HepG2 (cell line): ENCODE measurements at regions of chr2 and their contacts with region 1.

Region 1: GRCh38 chr2:183038341-183039300 is at the start of gene NCKAP1:
- DNase-seq: peak; percentile 76
- ATAC-seq: peak; percentile 92
- H3K4me3 ChIP-seq: peak within 1 kb of the TSS; percentile 79 to 99 (median 98)
- H3K27ac ChIP-seq: peak within 1 kb of the TSS; percentile 92
- H3K4me1 ChIP-seq: peaks cover 38% of the 10 kb centered on the region
- H3K27me3 ChIP-seq: peaks cover 2 to 13% of the 10 kb centered on the region in 2 experiments; a peak in 3 of 5 replicates
- CTCF ChIP-seq: peak; percentile 79
- EP300 ChIP-seq: peak in 1 of 2 experiments; percentile 17; a peak in 1 of 4 replicates
- POLR2A ChIP-seq: no peak
- RAD21 ChIP-seq: peak; percentile 88
- total RNA-seq, gene NCKAP1: 96.3 and 160 TPM in 2 replicates

Region 2: DNA sequence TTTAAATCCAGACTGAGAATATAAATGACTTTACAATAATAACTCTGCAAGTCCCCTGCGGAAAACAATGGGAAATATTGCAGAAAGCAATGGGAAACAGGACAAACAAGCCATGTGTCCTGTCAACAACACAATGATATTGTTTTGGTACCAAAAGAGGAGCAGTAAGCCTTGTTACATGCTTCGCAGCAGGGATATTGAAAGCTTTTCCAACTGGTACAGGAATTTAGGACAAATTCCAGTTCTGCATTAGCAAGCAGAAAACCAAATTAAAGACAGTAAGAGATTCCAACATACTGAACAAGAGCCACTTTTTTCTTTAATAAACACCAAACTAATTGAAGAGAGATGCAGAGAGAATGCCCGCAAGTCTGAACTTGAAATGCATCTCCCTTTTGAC is 202.2 kb before region 1 on chr2:
- CTCF ChIA-PET with region 1: no interaction called
- POLR2A ChIA-PET with region 1: no interaction called
- in situ Hi-C with region 1: no loop called
- intact Hi-C with region 1: no loop called
- DNase-seq: no peak
- ATAC-seq: no peak
- H3K4me3 ChIP-seq: no peak overlapping the region
- H3K27ac ChIP-seq: no peak overlapping the region
- H3K4me1 ChIP-seq: no peaks in the 10 kb centered on the region
- H3K27me3 ChIP-seq: no peaks in the 10 kb centered on the region
- CTCF ChIP-seq: no peak
- EP300 ChIP-seq: no peak
- POLR2A ChIP-seq: no peak
- RAD21 ChIP-seq: no peak

Region 3: GRCh38 chr2:183024339-183025095 is 14.1 kb before region 1 on chr2:
- CTCF ChIA-PET with region 1: no interaction called
- POLR2A ChIA-PET with region 1: no interaction called
- in situ Hi-C with region 1: no loop called
- intact Hi-C with region 1: no loop called
- DNase-seq: no peak
- ATAC-seq: no peak
- H3K4me3 ChIP-seq: no peak overlapping the region
- H3K27ac ChIP-seq: no peak overlapping the region
- H3K4me1 ChIP-seq: peaks cover 16% of the 10 kb centered on the region; the same call in 1 of the 2 replicates
- H3K27me3 ChIP-seq: no peaks in the 10 kb centered on the region
- CTCF ChIP-seq: no peak
- EP300 ChIP-seq: no peak
- POLR2A ChIP-seq: no peak
- RAD21 ChIP-seq: no peak

Region 4: GRCh38 chr2:183057333-183057985 is 18.8 kb after region 1 on chr2:
- CTCF ChIA-PET with region 1: no interaction called
- POLR2A ChIA-PET with region 1: no interaction called
- in situ Hi-C with region 1: no loop called
- intact Hi-C with region 1: loop called (anchors 2 kb)
- DNase-seq: no peak
- ATAC-seq: peak; percentile 25
- H3K4me3 ChIP-seq: peak overlapping the region in 1 of 3 experiments; percentile 18; a peak in 2 of 6 replicates
- H3K27ac ChIP-seq: peak overlapping the region; percentile 64
- H3K4me1 ChIP-seq: peaks cover 47% of the 10 kb centered on the region
- H3K27me3 ChIP-seq: 0 out of 5 replicates have a peak, but pooled peaks cover 0 to 1% of the 10 kb centered on the region in 2 experiments
- CTCF ChIP-seq: no peak
- EP300 ChIP-seq: no peak
- POLR2A ChIP-seq: no peak
- RAD21 ChIP-seq: no peak

Region 5: DNA sequence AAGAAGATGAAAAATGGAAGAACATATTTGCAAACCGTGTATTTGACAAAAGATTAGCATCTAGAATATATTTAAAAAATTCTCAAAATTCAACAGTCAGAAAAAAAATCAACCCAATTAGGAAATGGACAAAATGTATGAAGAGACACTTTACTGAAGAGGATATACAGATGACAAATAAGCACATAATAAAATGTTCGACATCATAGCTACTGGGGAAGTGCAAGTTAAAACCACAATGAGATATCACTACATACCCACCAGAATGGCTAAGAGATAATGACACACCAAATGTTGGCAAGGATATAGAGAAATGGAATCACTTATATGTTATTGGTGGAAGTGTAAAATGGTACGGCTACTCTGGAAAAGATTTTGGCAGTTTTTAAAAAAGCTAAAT is 74.0 kb after region 1 on chr2:
- CTCF ChIA-PET with region 1: no interaction called
- POLR2A ChIA-PET with region 1: no interaction called
- in situ Hi-C with region 1: no loop called
- intact Hi-C with region 1: no loop called
- DNase-seq: no peak
- ATAC-seq: no peak
- H3K4me3 ChIP-seq: no peak overlapping the region
- H3K27ac ChIP-seq: no peak overlapping the region
- H3K4me1 ChIP-seq: no peaks in the 10 kb centered on the region
- H3K27me3 ChIP-seq: peaks cover 0 to 4% of the 10 kb centered on the region in 2 experiments; a peak in 1 of 5 replicates
- CTCF ChIP-seq: no peak
- EP300 ChIP-seq: no peak
- POLR2A ChIP-seq: no peak
- RAD21 ChIP-seq: no peak

Region 6: DNA sequence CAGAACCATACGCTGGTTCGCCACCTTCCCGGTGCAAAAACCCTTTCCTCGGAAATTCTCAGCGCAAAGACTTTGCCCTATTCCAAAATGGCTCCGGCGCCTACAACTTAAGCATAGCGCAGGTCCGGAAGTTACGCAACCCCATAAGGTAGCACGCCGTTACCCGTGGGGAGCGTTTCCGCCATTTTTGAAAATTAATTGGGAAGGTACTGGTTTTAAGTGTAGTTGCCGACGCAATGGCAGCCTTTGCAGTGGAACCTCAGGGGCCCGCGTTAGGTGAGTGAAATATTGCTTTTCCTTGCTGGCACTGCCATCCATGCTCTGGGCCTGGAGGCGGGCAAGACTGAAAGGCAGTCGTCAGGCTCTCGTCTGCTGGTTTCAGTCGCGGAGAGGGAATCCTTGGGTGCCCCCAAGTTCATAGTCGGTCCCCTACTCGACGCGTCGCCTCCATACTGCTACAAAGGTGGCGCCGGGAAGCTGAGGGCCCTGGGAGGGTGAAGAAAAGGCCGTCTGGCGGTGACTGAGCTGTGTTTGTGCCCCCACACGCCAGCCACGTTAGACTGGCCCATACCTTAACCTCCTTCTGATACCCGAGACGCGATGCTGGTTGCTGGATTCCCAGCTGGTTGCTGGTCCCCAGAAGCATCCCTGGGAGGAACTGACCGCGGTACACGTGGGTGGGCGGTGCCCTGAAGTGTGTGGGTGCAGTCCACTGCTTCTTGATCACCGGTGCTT is 85.8 kb after region 1 on chr2 and contains the start of gene NUP35:
- CTCF ChIA-PET with region 1: no interaction called
- POLR2A ChIA-PET with region 1: interaction called, 5 read pairs
- in situ Hi-C with region 1: no loop called
- intact Hi-C with region 1: loop called (anchors 1 kb)
- DNase-seq: peak; percentile 93
- ATAC-seq: peak; percentile 93
- H3K4me3 ChIP-seq: peak within 1 kb of the TSS; percentile 81 to 90 (median 87)
- H3K27ac ChIP-seq: peak within 1 kb of the TSS; percentile 87
- H3K4me1 ChIP-seq: peaks cover 34% of the 10 kb centered on the region
- H3K27me3 ChIP-seq: no peaks in the 10 kb centered on the region; a peak in 1 of 5 replicates
- CTCF ChIP-seq: no peak
- EP300 ChIP-seq: peak; percentile 39 to 68; a peak in 2 of 4 replicates
- POLR2A ChIP-seq: peak; percentile 83 to 91
- RAD21 ChIP-seq: 0 out of 2 replicates have a peak, but pooled peaks have one; percentile 15
- total RNA-seq, gene NUP35: 53.6 and 74.2 TPM in 2 replicates